ENCODE measurements at regions of chr4 and their contacts with region 1.

Region 1: DNA sequence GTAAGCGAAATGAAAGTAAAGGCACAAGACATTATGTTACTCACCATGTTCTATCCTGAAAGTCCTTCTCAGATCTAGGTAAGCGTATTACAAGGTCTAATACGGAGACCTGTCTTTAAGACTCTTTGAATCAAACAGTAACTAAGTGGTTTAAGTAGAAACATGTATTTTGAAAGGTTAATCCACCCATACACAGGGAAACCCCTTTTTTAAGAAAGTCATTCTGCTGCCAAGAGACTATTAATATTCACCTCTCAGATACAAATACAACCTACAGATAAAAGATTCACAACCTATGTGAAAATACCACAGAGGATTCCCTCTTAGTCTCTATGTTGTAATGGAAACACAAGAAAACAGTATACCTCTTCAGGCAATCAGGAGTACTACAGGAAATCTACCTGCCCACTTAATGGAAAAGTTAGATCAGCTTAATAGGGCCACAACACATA is 63.2 kb upstream of the TNIP3 start:
- DNase-seq: no peak
- ATAC-seq: peak; percentile 69
- H3K4me3 Mint-ChIP-seq: peak overlapping the region; percentile 80
- H3K27ac Mint-ChIP-seq: peak overlapping the region; percentile 99
- H3K4me1 Mint-ChIP-seq: peaks cover 44% of the 10 kb centered on the region
- H3K27me3 Mint-ChIP-seq: no peaks in the 10 kb centered on the region

Region 2: GRCh38 chr4:121139533-121140222 is 87.7 kb before region 1 on chr4:
- CTCF ChIA-PET with region 1: no interaction called
- DNase-seq: no peak
- ATAC-seq: peak; percentile 46
- H3K4me3 Mint-ChIP-seq: no peak overlapping the region
- H3K27ac Mint-ChIP-seq: peak overlapping the region; percentile 67
- H3K4me1 Mint-ChIP-seq: peaks cover 36% of the 10 kb centered on the region
- H3K27me3 Mint-ChIP-seq: no peaks in the 10 kb centered on the region

Region 3: GRCh38 chr4:121243485-121243884 is 16.1 kb after region 1 on chr4:
- CTCF ChIA-PET with region 1: interaction called, 10 read pairs
- DNase-seq: no peak
- ATAC-seq: peak; percentile 74
- H3K4me3 Mint-ChIP-seq: peak overlapping the region; percentile 73
- H3K27ac Mint-ChIP-seq: peak overlapping the region; percentile 77
- H3K4me1 Mint-ChIP-seq: peaks cover 33% of the 10 kb centered on the region
- H3K27me3 Mint-ChIP-seq: no peaks in the 10 kb centered on the region